ENCODE measurements at regions of chr10 and their contacts with region 1.

Region 1: GRCh38 chr10:75117995-75118394 is 6.5 kb downstream of the SAMD8 start:
- DNase-seq: no peak
- ATAC-seq: no peak
- H3K4me3 ChIP-seq: no peak overlapping the region
- H3K27ac ChIP-seq: peak overlapping the region; percentile 99
- H3K4me1 ChIP-seq: peaks cover 93% of the 10 kb centered on the region
- H3K27me3 ChIP-seq: no peaks in the 10 kb centered on the region
- CTCF ChIP-seq: no peak

Region 2: DNA sequence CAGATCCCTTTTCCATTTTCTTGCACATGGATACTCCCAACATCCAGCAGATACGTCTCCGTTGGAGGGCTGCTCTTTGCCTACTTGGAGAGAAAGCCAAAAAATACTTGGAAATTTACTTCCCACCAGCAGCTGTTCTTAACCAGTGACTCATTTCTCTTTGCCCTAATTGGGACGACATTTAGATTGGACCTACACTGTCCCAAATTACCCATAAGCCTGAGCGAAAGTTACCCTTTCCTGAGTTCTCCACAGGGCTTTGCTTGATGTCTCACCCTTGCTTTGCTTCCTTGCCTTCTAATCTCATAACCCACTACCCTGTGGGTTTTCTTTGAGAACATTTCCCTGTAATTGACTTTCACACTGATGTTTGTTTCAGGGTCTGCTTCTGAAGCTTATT is 41.5 kb after region 1 on chr10:
- intact Hi-C with region 1: loop called (anchors 5 kb)
- DNase-seq: no peak
- ATAC-seq: peak; percentile 55 to 73 (median 66)
- H3K4me3 ChIP-seq: no peak overlapping the region
- H3K27ac ChIP-seq: peak overlapping the region; percentile 37
- H3K4me1 ChIP-seq: peaks cover 22% of the 10 kb centered on the region
- H3K27me3 ChIP-seq: no peaks in the 10 kb centered on the region
- CTCF ChIP-seq: no peak

Region 3: GRCh38 chr10:75165684-75166622 is 48.0 kb after region 1 on chr10:
- intact Hi-C with region 1: loop called in 1 of 2 experiments (anchors 5 kb)
- DNase-seq: no peak
- ATAC-seq: no peak
- H3K4me3 ChIP-seq: no peak overlapping the region
- H3K27ac ChIP-seq: peak overlapping the region; percentile 47
- H3K4me1 ChIP-seq: peaks cover 39% of the 10 kb centered on the region
- H3K27me3 ChIP-seq: no peaks in the 10 kb centered on the region
- CTCF ChIP-seq: no peak

Measured in psoas muscle (tissue), 8 donors.